ENCODE measurements at regions of chr22 and their contacts with region 1.

Region 1: DNA sequence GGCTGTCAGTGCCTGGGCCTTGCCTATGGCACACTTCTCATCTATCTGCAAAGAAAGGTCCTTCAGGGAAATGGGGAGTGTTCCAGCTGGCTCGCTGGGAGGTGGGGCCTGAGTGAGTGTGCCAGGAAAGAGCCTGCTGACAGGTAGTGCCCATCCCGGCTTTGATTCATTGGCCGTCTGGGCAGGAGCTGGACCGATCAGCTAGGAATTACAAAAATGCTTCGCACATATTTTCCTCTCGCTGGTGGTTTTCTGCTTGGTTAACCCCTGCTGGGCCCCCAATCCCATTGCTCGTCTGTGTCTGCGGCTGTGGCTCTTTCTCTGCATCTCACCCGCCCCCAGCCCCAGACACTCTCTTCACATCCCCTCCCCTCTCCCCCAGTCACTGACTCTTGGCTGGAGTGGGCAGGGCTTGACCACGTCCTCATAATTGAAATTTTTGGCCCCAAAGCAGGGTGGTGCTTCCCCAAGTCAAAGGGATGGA is 10.8 kb downstream of the LIF start:
- DNase-seq: peak; percentile 91 to 98
- H3K4me3 ChIP-seq: no peak overlapping the region; the same call in 1 of the 2 replicates
- H3K27ac ChIP-seq: peak overlapping the region; percentile 95
- H3K4me1 ChIP-seq: peaks cover 73% of the 10 kb centered on the region
- H3K27me3 ChIP-seq: no peaks in the 10 kb centered on the region
- CTCF ChIP-seq: no peak

Region 2: DNA sequence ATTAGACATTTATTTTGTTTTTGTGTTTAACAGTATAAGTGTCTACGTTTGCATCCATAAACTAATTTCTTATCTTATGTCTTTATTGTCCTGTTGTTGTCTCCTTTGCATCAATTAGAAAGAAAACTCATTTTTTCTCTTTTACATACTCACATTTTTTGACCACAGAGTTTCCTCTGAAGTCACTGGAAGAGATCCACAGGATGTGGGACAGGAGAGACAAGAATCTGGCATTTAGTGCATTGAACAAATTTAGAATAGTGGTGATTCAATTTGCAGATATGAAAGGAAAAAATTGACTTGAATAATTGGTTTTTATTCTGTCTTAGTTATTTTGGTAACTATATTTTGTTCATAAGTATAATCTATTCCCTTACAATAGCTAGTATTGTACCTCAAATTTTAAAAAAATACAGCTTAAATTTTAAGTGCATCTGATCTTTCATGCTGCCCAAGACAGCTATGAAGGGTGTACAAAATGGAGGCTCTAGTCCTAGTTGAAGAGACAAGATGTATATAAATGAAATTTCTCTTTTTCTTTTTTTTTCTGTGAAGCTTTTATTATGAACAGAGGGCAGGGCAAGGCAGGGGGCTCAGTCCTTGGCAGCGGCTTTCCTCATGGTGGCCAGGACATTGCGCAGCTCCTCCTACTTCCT is 131.1 kb before region 1 on chr22:
- CTCF ChIA-PET with region 1: no interaction called
- POLR2A ChIA-PET with region 1: no interaction called
- intact Hi-C with region 1: loop called (anchors 5 kb)
- DNase-seq: no peak
- H3K4me3 ChIP-seq: no peak overlapping the region
- H3K27ac ChIP-seq: no peak overlapping the region
- H3K4me1 ChIP-seq: no peaks in the 10 kb centered on the region; the same call in none of the 2 replicates
- H3K27me3 ChIP-seq: no peaks in the 10 kb centered on the region
- CTCF ChIP-seq: no peak

Region 3: GRCh38 chr22:30212363-30212995 is 23.2 kb before region 1 on chr22:
- CTCF ChIA-PET with region 1: interaction called, 4 read pairs
- POLR2A ChIA-PET with region 1: no interaction called
- intact Hi-C with region 1: loop called (anchors 1 kb)
- DNase-seq: peak; percentile 89 to 100
- H3K4me3 ChIP-seq: no peak overlapping the region
- H3K27ac ChIP-seq: peak overlapping the region; percentile 98
- H3K4me1 ChIP-seq: peaks cover 86% of the 10 kb centered on the region
- H3K27me3 ChIP-seq: no peaks in the 10 kb centered on the region
- CTCF ChIP-seq: no peak; the same call in 1 of the 2 replicates